ENCODE measurements at regions of chr4 and their contacts with region 1.

Region 1: GRCh38 chr4:102826890-102827673 is at the start of gene UBE2D3:
- DNase-seq: peak; percentile 94 to 97 (median 97)
- H3K4me3 ChIP-seq: peak within 1 kb of the TSS; percentile 93
- H3K27ac ChIP-seq: peak within 1 kb of the TSS; percentile 99 to 100
- H3K4me1 ChIP-seq: no peaks in the 10 kb centered on the region
- H3K27me3 ChIP-seq: no peaks in the 10 kb centered on the region
- CTCF ChIP-seq: no peak
- EP300 ChIP-seq: peak; percentile 47
- POLR2A ChIP-seq: peak; percentile 91
- total RNA-seq, gene UBE2D3: 211 to 336 (median 258) TPM

Region 2: DNA sequence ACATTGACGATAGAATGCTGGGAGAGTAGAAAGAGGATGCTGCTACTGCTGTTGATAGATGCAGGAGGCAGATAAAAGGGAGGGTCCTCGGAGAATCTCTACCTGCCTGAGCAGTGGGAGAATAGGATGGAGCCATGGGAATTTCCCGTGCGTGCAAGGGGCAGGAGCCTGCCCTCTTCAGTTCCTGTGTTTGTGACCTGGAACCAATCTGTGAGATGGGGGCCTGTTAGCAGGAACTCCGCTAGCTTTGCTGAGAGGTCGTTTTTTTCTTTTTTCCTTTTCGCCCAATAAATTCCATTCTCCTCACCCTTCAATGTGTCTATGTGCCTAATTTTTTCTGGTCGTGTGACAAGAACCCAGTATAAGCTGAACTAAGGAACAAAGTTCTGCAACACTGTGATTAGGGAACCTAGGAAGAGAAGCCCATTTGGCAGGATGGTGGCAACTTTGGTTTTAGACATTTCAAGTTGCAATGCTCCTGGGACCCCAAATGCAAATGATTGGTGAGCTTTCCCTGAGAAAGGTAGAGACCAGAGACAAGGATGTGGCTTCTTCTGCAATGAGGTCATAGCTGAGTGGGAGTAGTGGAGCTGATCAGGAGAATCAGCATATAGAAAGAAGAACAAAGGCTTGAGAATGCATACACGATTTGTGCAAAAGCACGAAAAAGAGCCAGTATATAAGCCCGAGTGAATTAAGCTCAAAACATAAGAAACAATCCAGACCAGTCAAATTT is 505.7 kb before region 1 on chr4:
- intact Hi-C with region 1: no loop called
- DNase-seq: no peak
- H3K4me3 ChIP-seq: no peak overlapping the region
- H3K27ac ChIP-seq: no peak overlapping the region
- H3K4me1 ChIP-seq: no peaks in the 10 kb centered on the region
- H3K27me3 ChIP-seq: no peaks in the 10 kb centered on the region
- CTCF ChIP-seq: no peak
- EP300 ChIP-seq: no peak
- POLR2A ChIP-seq: no peak

Region 3: GRCh38 chr4:102500696-102501446 is 326.2 kb before region 1 on chr4 and contains the start of gene NFKB1:
- intact Hi-C with region 1: loop called in 1 of 4 experiments (anchors 5 kb)
- DNase-seq: peak; percentile 68 to 81 (median 73)
- H3K4me3 ChIP-seq: peak within 1 kb of the TSS; percentile 68
- H3K27ac ChIP-seq: peak within 1 kb of the TSS; percentile 99 to 100
- H3K4me1 ChIP-seq: peaks cover 4% of the 10 kb centered on the region
- H3K27me3 ChIP-seq: no peaks in the 10 kb centered on the region
- CTCF ChIP-seq: no peak
- EP300 ChIP-seq: peak; percentile 3
- POLR2A ChIP-seq: peak; percentile 14
- total RNA-seq, gene NFKB1: 18.6 to 42.4 (median 36.6) TPM

Region 4: DNA sequence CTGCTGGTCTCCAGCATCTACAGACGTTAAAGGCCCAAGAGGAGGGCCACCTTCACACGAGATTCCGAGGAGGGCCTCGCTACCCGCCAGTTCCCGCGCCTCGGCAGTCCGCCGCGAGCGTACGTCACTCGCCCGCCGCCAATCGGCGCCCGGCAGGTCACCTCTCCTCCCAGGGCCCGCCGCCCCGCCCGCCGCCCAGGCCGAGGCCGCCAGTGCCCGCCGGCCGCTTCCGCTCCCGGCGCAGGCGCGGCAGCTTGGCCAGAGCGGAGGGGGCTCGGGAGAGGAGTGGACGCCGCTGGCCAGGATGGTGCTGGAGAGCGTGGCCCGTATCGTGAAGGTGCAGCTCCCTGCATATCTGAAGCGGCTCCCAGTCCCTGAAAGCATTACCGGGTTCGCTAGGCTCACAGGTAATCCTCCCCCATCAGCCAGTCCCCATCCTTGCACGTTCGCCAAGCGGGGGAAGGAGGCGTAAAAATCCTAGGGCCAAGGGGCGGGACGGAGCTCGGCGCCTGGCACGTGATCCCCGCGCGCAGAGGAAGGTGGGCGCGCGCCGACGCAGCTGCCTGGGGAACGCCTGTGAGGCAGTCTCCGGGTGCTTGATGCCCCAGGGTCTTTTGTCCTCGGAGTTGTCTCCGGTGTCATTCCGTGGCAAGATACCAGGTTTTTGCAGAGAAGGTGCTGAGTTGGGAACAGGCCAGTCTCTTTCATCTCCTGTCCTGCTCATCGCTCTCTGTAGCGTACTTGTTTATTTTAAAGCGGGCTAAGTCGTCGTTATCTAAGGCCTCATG is 41.9 kb after region 1 on chr4 and contains the start of gene CISD2:
- intact Hi-C with region 1: loop called in 2 of 4 experiments (anchors 1 to 2 kb)
- DNase-seq: peak; percentile 91 to 95 (median 93)
- H3K4me3 ChIP-seq: peak within 1 kb of the TSS; percentile 63
- H3K27ac ChIP-seq: peak within 1 kb of the TSS; percentile 89 to 93
- H3K4me1 ChIP-seq: peaks cover 2% of the 10 kb centered on the region
- H3K27me3 ChIP-seq: no peaks in the 10 kb centered on the region
- CTCF ChIP-seq: peak in 1 of 3 donors; percentile 32
- EP300 ChIP-seq: no peak
- POLR2A ChIP-seq: peak; percentile 90
- total RNA-seq, gene CISD2: 7.9 to 22.7 (median 19.1) TPM